Heart right ventricle (tissue), 16 donors: ENCODE measurements at regions of chr1 and their contacts with region 1.

Region 1: DNA sequence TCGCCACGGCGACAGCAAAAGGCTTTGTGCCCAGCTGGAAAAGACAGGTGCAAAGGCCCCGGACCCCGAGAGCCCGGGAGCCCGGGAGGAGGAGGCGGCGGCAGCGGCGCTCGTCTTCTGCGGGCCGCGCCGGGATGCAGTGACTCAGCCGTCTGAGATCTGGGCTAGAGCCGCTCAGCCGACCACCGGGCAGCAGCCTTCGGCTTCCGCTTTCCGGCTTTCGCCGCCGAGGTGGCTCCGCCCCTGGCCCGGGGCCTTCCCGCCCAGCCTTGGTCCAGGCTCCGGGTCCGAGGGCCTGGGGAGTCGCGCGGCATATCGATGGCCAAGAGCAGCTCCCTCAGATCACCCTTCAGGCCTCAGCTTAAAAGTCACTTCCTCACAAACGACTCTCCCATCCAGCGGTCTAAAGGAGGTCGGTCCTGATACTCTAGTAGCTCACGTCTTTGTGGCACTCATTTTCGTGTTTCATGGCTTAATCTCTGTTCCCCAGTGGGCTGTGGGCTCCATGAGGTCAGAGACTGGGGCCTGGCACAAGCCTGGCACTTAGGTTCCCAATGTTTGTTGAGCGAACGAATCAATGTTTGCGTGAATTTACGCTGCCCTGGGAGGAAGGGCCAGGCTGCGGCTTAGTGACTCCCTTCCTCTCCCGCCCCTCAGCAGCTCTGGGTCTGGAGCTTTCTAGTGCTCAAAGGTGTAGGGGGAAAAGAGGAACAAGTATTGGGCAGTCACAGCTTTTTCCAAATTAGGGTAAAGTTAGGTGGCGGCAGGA is at the start of gene PHTF1:
- DNase-seq: peak; percentile 71 to 79
- ATAC-seq: peak; percentile 90 to 97 (median 94)
- H3K4me3 ChIP-seq: peak within 1 kb of the TSS; percentile 77 to 99 (median 94)
- H3K27ac ChIP-seq: peak within 1 kb of the TSS; percentile 81 to 99 (median 97)
- H3K4me1 ChIP-seq: peaks cover 0 to 33% (median 20%) of the 10 kb centered on the region in 9 donors
- H3K27me3 ChIP-seq: no peaks in the 10 kb centered on the region
- CTCF ChIP-seq: no peak
- total RNA-seq, gene PHTF1: 7.7 to 14.8 (median 10.0) TPM

Region 2: DNA sequence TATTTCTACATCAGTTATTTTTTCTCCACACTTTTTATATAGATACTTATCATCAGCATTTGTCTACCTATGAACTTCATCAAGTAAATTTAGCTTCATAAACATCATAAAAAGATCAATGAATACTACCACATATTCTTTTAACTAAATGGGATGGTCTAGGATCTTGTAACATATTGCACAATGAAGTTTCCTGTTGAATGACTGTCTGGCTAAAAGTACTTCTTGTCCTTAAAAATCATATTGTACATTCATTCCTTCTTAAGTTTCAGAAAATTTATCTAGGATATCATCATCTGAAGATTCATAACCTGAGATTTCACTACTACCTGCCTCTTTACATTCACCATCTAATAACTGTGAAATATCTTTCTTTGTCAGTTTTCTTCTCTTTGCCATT is 300.2 kb before region 1 on chr1:
- intact Hi-C with region 1: no loop called
- DNase-seq: no peak
- ATAC-seq: no peak
- H3K4me3 ChIP-seq: no peak overlapping the region
- H3K27ac ChIP-seq: no peak overlapping the region
- H3K4me1 ChIP-seq: peaks cover 0 to 19% (median 0%) of the 10 kb centered on the region in 9 donors
- H3K27me3 ChIP-seq: no peaks in the 10 kb centered on the region
- CTCF ChIP-seq: no peak

Region 3: DNA sequence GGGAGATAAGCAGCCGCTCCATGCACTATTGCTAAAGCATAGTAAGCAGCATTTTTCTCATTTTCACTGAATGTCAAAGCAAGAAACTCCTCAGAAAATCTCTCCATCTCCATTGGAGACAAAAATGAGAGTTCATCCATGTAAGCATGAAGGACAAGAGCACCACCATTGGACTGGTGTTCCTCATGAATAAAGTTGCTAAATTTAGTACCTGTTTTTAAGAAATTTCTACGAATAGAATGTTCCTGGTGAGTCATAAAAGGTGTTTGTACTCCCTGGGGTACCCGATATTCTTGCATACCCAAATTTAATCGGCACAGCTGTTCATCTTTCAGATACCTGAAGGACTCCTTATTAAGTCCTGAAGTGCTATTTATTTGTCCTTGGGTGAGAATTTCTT is 38.0 kb after region 1 on chr1:
- intact Hi-C with region 1: loop called in 1 of 10 experiments (anchors 5 kb)
- DNase-seq: no peak
- ATAC-seq: no peak
- H3K4me3 ChIP-seq: no peak overlapping the region
- H3K27ac ChIP-seq: no peak overlapping the region
- H3K4me1 ChIP-seq: peaks cover 0 to 74% (median 22%) of the 10 kb centered on the region in 9 donors
- H3K27me3 ChIP-seq: no peaks in the 10 kb centered on the region
- CTCF ChIP-seq: no peak

Region 4: GRCh38 chr1:113811888-113812660 is 52.6 kb after region 1 on chr1 and contains the start of gene RSBN1:
- intact Hi-C with region 1: loop called in 8 of 10 experiments (anchors 1 to 10 kb)
- DNase-seq: peak; percentile 99
- ATAC-seq: peak; percentile 97 to 99 (median 98)
- H3K4me3 ChIP-seq: peak within 1 kb of the TSS; percentile 76 to 98 (median 91)
- H3K27ac ChIP-seq: peak within 1 kb of the TSS; percentile 77 to 97 (median 95)
- H3K4me1 ChIP-seq: peaks cover 0 to 34% (median 25%) of the 10 kb centered on the region in 9 donors
- H3K27me3 ChIP-seq: no peaks in the 10 kb centered on the region
- CTCF ChIP-seq: peak in 6 of 9 donors; percentile 7 to 47 (median 24)
- total RNA-seq, gene RSBN1: 7.5 to 13.9 (median 11.8) TPM

Region 5: DNA sequence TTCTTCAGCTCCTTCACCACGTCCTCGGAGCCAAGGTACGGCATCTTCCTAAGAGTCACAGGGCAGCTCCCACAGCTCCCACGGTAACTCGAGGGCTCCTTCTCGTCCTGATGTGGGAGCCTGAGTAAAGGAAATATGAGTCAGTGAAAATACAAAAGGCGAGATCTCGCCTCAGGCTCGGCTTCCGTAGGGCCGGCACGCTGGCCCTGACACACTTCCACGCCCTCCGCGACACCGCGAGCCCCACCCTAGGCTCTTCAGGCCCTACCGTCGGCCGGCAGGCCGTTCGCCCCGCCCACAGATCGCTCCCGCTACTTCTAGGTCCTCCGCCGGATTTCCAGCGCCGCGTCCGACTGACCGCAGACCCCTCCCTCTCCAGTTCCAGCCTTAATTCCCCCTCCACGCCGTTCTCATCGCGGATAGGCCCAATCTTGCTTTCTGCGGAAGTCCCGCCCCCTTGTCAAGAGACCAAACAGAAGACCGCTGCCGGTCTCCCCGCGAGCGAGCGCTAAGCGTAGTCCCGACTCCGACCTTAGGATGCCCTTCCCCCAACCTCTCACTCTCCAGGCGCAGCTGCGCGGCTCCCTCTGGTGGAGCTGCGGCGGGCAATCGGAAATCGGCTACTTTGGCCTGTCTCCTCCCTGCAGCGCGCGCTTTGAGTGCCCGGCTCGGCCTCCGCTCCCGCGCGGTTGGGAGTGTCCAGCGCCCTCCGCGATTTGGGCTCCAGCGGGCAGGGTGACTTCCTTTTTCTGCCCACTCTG is 145.3 kb after region 1 on chr1 and contains the starts of genes AP4B1 and DCLRE1B:
- intact Hi-C with region 1: loop called in 3 of 10 experiments (anchors 5 to 10 kb)
- DNase-seq: peak; percentile 98 to 100
- ATAC-seq: peak; percentile 96 to 99 (median 98)
- H3K4me3 ChIP-seq: peak within 1 kb of the TSS; percentile 58 to 86 (median 78)
- H3K27ac ChIP-seq: peak within 1 kb of the TSS; percentile 52 to 95 (median 92)
- H3K4me1 ChIP-seq: peaks cover 0 to 49% (median 24%) of the 10 kb centered on the region in 9 donors
- H3K27me3 ChIP-seq: no peaks in the 10 kb centered on the region
- CTCF ChIP-seq: peak; percentile 37 to 88 (median 71)
- total RNA-seq, gene AP4B1: 9.1 to 13.9 (median 11.5) TPM
- total RNA-seq, gene DCLRE1B: 0.78 to 4.2 (median 2.1) TPM